ENCODE measurements at regions of chr4 and their contacts with region 1.

Region 1: DNA sequence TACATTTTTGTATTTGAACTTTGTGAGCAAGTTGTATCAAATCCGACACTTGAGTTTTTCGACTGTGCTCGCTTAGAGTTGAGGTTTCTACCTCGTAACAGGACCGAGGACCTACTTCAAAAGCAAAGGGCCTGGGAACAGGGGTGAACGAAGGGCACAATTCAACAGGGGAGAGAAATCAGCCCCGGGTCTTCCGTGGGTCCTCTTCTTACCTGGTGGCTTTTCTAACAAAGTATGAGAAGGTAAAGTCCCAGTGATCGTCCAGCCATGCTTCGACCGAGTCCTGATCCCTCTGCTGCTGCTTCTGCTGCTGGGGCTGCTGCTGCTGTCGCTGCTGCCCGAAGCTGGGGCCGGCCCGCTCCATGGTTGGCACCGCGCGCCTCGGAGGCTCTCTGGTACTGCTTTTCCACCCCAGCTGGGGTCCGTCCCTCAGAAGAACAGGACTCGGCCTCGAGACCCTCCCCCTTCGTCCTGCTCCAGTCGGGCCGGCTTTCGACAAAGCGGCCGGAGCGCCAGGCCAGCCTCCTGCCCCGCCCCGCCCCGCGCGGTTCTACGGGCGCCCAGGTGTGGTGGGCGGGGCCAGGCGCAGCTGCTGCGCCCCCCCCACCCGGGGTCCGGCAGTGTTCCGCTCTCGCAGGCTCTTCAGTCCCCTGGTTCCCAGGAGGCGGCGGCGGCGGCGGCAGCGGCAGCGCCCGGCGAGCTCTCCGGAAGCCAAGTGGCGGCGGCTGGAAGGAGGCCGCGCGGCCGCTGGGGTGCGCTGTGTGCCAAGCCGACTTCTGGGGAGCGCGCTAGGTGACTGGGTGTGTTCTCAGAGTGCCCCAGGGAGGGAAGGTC is at the start of gene PDE5A:
- DNase-seq: peak; percentile 93
- ATAC-seq: peak; percentile 82
- H3K4me3 Mint-ChIP-seq: peak within 1 kb of the TSS; percentile 94
- H3K27ac Mint-ChIP-seq: peak within 1 kb of the TSS; percentile 95
- H3K4me1 Mint-ChIP-seq: peaks cover 33% of the 10 kb centered on the region
- H3K27me3 Mint-ChIP-seq: no peaks in the 10 kb centered on the region; the same call in 1 of the 2 replicates
- CTCF ChIP-seq: peak; percentile 61
- total RNA-seq, gene PDE5A: 25.6 to 26.4 TPM (median 26.4 TPM) in 3 replicates

Region 2: DNA sequence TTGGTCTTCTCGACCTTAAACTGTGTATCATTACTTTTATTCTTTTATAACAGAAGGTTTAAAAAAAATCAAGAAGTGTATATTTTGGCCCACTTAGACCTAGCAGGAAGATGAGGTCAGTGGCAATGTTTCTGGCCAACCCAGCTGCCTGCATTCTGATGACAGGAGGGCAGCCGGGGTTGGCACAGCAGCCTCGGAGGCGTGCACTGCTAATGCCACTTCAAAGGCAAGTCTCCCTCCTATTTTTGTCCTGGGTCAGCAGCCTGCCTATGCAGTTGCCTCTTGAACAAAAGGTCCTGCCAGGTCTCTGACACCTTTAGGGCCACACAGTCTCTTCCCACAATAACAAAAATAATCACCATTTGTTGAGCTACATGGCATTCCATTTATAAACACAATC is 582.3 kb before region 1 on chr4:
- CTCF ChIA-PET with region 1: no interaction called
- POLR2A ChIA-PET with region 1: no interaction called
- DNase-seq: no peak
- ATAC-seq: no peak
- H3K4me3 Mint-ChIP-seq: no peak overlapping the region
- H3K27ac Mint-ChIP-seq: no peak overlapping the region
- H3K4me1 Mint-ChIP-seq: peaks cover 24% of the 10 kb centered on the region
- H3K27me3 Mint-ChIP-seq: no peaks in the 10 kb centered on the region
- CTCF ChIP-seq: no peak

Region 3: DNA sequence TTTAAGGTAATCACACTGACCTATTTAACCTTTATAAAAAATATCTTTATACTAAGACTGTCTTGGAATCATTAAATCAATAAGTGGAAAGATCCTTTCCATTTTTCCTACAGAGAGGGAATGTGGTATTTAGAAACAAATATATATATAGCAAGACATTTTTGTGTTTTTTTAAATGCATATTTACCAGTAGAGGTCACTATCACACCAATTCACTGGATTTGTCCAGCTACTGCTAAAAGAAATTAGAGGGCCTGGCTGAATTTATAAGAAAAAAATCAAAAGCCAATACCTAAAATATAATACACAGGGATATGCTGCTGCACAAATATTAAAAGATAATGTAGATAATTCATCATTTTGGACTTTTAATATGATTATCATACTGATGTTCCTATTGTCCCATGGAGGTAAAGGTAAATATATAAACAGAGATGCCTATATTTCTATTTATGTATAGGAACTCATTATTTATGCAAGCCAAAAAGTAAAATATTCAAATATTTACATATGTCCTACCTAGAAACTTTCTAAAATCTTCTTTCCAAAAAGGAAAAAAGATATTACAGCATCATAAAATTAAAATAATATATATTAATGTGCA is 69.4 kb before region 1 on chr4:
- CTCF ChIA-PET with region 1: interaction called, 45 read pairs
- POLR2A ChIA-PET with region 1: no interaction called
- DNase-seq: no peak
- ATAC-seq: no peak
- H3K4me3 Mint-ChIP-seq: no peak overlapping the region
- H3K27ac Mint-ChIP-seq: no peak overlapping the region
- H3K4me1 Mint-ChIP-seq: no peaks in the 10 kb centered on the region
- H3K27me3 Mint-ChIP-seq: no peaks in the 10 kb centered on the region
- CTCF ChIP-seq: no peak; the same call in 1 of the 2 replicates

Region 4: DNA sequence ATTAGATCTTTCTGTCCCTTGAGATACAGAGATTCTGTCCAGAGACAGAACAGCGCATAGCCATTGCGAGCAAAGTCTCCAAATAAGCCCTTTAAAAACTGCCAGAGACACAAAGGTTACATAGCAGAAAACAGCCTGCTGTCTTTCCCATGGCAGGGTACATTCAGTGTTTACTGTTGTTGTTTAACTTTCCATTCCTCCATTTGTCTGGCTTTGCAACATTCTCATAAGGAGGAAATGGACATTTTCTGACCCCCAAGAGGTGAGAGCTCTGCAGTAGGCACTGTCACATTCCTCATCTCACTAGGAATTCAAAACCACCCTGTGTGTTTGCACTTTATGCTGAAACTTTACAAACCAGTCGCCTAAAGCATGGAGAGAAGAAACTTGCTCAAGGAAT is 48.2 kb before region 1 on chr4:
- CTCF ChIA-PET with region 1: no interaction called
- POLR2A ChIA-PET with region 1: no interaction called
- DNase-seq: no peak
- ATAC-seq: no peak
- H3K4me3 Mint-ChIP-seq: no peak overlapping the region
- H3K27ac Mint-ChIP-seq: peak overlapping the region; percentile 73
- H3K4me1 Mint-ChIP-seq: peaks cover 13% of the 10 kb centered on the region
- H3K27me3 Mint-ChIP-seq: no peaks in the 10 kb centered on the region
- CTCF ChIP-seq: no peak

Region 5: DNA sequence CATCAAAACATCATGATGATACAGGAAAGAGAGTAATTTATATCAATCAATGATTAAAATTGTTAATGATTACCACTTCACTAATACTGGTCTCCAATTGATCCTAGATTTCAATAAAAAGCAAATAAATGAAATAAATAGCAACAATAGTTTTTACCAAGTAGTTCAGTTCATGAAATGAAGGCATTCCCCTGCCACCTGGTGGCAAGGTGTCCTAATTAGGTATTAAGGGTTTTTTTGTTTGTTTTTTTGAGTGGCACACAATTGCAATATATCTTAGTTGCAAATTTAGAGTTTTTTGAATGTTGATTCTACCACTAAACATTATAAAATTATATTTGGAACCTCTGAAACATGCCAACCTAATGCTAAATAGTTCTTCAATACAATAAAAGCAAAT is 157.4 kb after region 1 on chr4:
- CTCF ChIA-PET with region 1: interaction called, 14 read pairs
- POLR2A ChIA-PET with region 1: no interaction called
- DNase-seq: peak; percentile 22
- ATAC-seq: no peak
- H3K4me3 Mint-ChIP-seq: no peak overlapping the region
- H3K27ac Mint-ChIP-seq: no peak overlapping the region
- H3K4me1 Mint-ChIP-seq: peaks cover 3% of the 10 kb centered on the region
- H3K27me3 Mint-ChIP-seq: no peaks in the 10 kb centered on the region
- CTCF ChIP-seq: peak; percentile 25; the same call in 1 of the 2 replicates

Region 6: DNA sequence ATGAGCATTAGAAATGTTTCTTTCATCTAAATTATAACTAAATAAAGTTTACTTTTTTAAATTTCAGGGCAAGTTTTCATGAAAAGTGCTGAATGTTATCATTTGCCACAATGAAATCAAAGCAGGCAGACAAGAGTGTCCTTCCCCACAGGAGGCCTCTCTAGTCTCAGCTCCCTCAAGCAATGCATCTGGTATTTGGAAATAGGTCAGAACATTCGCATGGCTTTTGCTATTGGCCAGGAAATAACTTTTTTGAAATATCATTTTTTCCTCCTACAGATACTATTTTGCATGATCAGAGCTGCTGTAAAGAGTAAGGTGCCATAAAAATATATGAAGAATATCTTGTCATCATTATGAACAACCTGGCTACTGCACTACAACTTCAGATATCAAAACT is 397.0 kb after region 1 on chr4:
- CTCF ChIA-PET with region 1: interaction called, 10 read pairs
- POLR2A ChIA-PET with region 1: no interaction called
- DNase-seq: no peak
- ATAC-seq: no peak
- H3K4me3 Mint-ChIP-seq: no peak overlapping the region
- H3K27ac Mint-ChIP-seq: no peak overlapping the region
- H3K4me1 Mint-ChIP-seq: peaks cover 10% of the 10 kb centered on the region; the same call in 1 of the 2 replicates
- H3K27me3 Mint-ChIP-seq: peaks cover 3% of the 10 kb centered on the region; the same call in 1 of the 2 replicates
- CTCF ChIP-seq: no peak

Region 7: GRCh38 chr4:120049732-120050494 is 421.4 kb after region 1 on chr4:
- CTCF ChIA-PET with region 1: interaction called, 10 read pairs
- POLR2A ChIA-PET with region 1: no interaction called
- DNase-seq: peak; percentile 85
- ATAC-seq: peak; percentile 93
- H3K4me3 Mint-ChIP-seq: peak overlapping the region; percentile 14; the same call in 1 of the 2 replicates
- H3K27ac Mint-ChIP-seq: peak overlapping the region; percentile 51; the same call in 1 of the 2 replicates
- H3K4me1 Mint-ChIP-seq: peaks cover 11% of the 10 kb centered on the region
- H3K27me3 Mint-ChIP-seq: no peaks in the 10 kb centered on the region
- CTCF ChIP-seq: peak; percentile 71

Region 8: DNA sequence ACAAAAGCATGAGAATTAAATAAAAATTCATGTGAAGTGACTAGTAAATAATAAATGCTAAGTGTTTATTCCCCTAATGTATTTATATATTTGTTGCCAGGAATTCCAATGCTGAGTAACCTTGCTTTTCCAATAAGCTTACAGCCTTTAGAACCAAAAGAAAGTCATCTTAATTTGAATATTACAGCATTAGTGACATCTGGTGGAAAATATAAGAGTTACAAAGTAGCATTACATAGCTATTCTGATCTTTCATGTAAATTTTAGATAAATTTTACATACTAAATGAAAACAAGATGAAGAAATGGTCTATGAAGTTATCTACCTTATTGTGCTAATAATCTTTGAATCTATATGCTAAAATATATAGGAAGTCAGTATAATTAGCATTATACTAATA is 427.7 kb after region 1 on chr4:
- CTCF ChIA-PET with region 1: interaction called, 16 read pairs
- POLR2A ChIA-PET with region 1: no interaction called
- DNase-seq: no peak
- ATAC-seq: no peak
- H3K4me3 Mint-ChIP-seq: no peak overlapping the region
- H3K27ac Mint-ChIP-seq: no peak overlapping the region
- H3K4me1 Mint-ChIP-seq: peaks cover 6% of the 10 kb centered on the region
- H3K27me3 Mint-ChIP-seq: no peaks in the 10 kb centered on the region
- CTCF ChIP-seq: no peak

Measured in WTC11 (cell line).